Naive thymus-derived CD4-positive, alpha-beta T cell (primary cell): ENCODE measurements at regions of chr6 and their contacts with region 1.

Region 1: GRCh38 chr6:142885182-142885867 is 59.7 kb downstream of the HIVEP2 start:
- DNase-seq: peak; percentile 28 to 91 (median 83)
- ATAC-seq: peak; percentile 92
- H3K4me3 ChIP-seq: peak overlapping the region; percentile 44
- H3K4me3 Mint-ChIP-seq: peak overlapping the region; percentile 78 to 98 (median 94)
- H3K27ac ChIP-seq: peak overlapping the region; percentile 84
- H3K27ac Mint-ChIP-seq: peak overlapping the region; percentile 76 to 100 (median 99)
- H3K4me1 ChIP-seq: peaks cover 52 to 62% of the 10 kb centered on the region in 2 donors
- H3K4me1 Mint-ChIP-seq: peaks cover 45 to 99% (median 94%) of the 10 kb centered on the region in 7 donors
- H3K27me3 ChIP-seq: no peaks in the 10 kb centered on the region
- H3K27me3 Mint-ChIP-seq: no peaks in the 10 kb centered on the region

Region 2: GRCh38 chr6:142146828-142147662 is 738.3 kb before region 1 on chr6 and contains the starts of genes NMBR and VTA1:
- CTCF ChIA-PET with region 1: no interaction called
- POLR2A ChIA-PET with region 1: no interaction called
- intact Hi-C with region 1: loop called in 1 of 2 experiments (anchors 10 kb)
- DNase-seq: peak; percentile 81 to 98 (median 97)
- ATAC-seq: peak; percentile 99
- H3K4me3 ChIP-seq: peak within 1 kb of the TSS; percentile 95
- H3K4me3 Mint-ChIP-seq: peak within 1 kb of the TSS; percentile 88 to 98 (median 95)
- H3K27ac ChIP-seq: peak within 1 kb of the TSS; percentile 75
- H3K27ac Mint-ChIP-seq: peak within 1 kb of the TSS; percentile 80 to 98 (median 94)
- H3K4me1 ChIP-seq: peaks cover 22 to 25% of the 10 kb centered on the region in 2 donors
- H3K4me1 Mint-ChIP-seq: peaks cover 36 to 73% (median 65%) of the 10 kb centered on the region in 7 donors
- H3K27me3 ChIP-seq: no peaks in the 10 kb centered on the region
- H3K27me3 Mint-ChIP-seq: peaks cover 0 to 2% (median 0%) of the 10 kb centered on the region in 5 donors
- total RNA-seq, gene NMBR: not detected
- total RNA-seq, gene VTA1: 13.6 to 41.3 (median 32.6) TPM

Region 3: DNA sequence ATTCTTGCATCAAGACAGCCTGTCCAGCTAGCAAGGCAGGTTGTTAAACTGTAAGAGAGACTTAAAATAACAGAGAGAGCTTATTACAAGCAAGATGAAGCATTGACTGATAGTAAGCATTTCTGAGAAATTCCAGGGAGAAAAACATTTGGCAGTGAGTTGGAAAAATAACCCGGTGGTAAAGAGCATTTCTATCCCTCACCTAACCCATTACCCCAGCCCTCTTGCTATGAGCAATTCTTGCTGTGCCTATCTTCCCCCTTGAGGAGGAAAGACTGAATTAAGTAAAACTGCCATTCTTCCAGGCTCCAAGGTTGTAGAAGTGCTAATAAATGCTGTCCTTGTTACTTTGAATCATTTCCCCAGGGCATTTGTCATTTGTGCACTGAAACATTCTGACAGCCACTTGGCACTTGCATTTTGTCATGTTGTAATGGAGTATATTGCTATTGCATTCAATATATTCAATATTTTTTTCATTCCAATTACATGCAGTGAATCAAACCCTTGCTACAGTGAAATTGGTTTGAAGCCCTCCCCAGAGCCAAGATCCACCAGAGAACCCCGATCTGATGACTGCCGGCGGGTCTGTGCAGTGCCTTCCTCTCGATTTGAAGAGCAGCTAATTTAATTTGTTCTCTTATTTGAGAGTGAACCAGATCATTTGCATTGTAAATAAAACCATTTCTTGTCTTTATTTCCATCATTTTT is 231.5 kb before region 1 on chr6:
- CTCF ChIA-PET with region 1: no interaction called
- POLR2A ChIA-PET with region 1: no interaction called
- intact Hi-C with region 1: no loop called
- DNase-seq: no peak
- ATAC-seq: no peak
- H3K4me3 ChIP-seq: no peak overlapping the region
- H3K4me3 Mint-ChIP-seq: no peak overlapping the region
- H3K27ac ChIP-seq: no peak overlapping the region
- H3K27ac Mint-ChIP-seq: no peak overlapping the region
- H3K4me1 ChIP-seq: no peaks in the 10 kb centered on the region
- H3K4me1 Mint-ChIP-seq: no peaks in the 10 kb centered on the region
- H3K27me3 ChIP-seq: no peaks in the 10 kb centered on the region
- H3K27me3 Mint-ChIP-seq: no peaks in the 10 kb centered on the region

Region 4: DNA sequence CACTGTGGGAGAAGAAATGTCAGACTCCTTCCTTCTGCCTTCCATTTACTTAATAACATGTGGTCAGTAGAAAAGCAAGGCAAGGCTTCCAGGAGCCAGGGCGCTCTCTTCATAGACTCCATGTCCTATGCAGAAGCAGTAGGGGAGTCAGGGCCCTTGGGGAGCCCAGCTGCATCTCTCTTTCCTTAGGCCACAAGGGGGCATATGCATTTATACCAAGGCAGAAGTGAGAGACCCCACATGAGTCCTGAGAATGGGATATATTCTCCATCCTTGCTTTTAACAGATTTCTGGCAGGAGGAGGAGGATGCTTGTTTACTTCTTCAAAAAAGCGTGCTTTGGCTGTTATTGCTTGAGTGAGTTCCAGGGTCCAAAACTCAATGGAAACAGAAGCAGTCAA is 138.8 kb before region 1 on chr6:
- CTCF ChIA-PET with region 1: interaction called, 4 read pairs
- POLR2A ChIA-PET with region 1: interaction called, 3 read pairs
- intact Hi-C with region 1: loop called (anchors 1 to 5 kb)
- DNase-seq: peak in 7 of 9 donors; percentile 16 to 49 (median 31)
- ATAC-seq: peak; percentile 69
- H3K4me3 ChIP-seq: no peak overlapping the region
- H3K4me3 Mint-ChIP-seq: no peak overlapping the region
- H3K27ac ChIP-seq: no peak overlapping the region
- H3K27ac Mint-ChIP-seq: peak overlapping the region in 2 of 9 donors; percentile 26 to 60
- H3K4me1 ChIP-seq: no peaks in the 10 kb centered on the region
- H3K4me1 Mint-ChIP-seq: peaks cover 0 to 30% (median 17%) of the 10 kb centered on the region in 7 donors
- H3K27me3 ChIP-seq: no peaks in the 10 kb centered on the region
- H3K27me3 Mint-ChIP-seq: peaks cover 0 to 4% (median 0%) of the 10 kb centered on the region in 5 donors

Region 5: DNA sequence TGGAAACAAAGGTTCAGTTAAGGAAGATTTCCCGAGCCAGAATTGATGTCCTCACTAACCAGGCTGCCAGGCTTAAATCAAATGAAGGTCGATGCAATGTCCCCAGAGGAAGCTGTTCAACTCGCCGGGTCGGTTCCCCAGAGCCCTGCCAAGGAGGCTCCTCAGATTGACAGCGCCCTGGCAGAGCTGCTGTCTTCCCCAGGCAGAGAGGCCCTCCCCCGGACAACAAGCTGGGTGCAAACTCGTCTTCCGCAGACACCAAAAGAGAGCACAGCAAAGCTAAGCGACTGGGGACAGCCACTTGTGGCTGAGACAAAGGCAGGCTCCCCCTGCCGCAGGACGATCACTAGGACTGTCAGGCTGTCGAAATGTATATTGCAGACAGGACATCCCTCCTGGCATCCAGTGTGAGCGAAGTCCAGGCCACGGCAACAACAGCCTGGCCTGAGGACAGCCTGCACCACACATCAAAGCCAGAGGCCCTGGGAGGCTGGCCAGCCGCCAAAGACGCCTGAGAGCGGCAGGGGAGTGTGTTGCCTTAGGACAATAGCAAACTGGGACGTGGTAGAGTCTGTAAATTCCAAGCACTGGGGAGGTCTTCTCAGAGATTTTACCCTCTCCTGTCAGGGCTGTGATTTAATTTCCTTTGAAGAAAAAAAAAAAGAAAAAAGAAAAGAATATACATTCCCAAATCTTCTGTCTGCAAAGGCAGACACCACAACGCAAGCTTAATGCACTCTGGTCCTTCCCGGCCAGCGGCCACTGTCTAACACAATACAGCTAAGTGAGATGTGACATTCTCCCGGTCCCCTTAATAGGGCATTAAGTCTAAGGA is 39.5 kb before region 1 on chr6:
- CTCF ChIA-PET with region 1: interaction called, 5 read pairs
- POLR2A ChIA-PET with region 1: interaction called, 10 read pairs
- intact Hi-C with region 1: loop called (anchors 1 kb)
- DNase-seq: peak; percentile 27 to 70 (median 63)
- ATAC-seq: peak; percentile 72
- H3K4me3 ChIP-seq: peak overlapping the region; percentile 44
- H3K4me3 Mint-ChIP-seq: peak overlapping the region; percentile 84 to 93 (median 86)
- H3K27ac ChIP-seq: peak overlapping the region; percentile 84
- H3K27ac Mint-ChIP-seq: peak overlapping the region; percentile 91 to 100 (median 95)
- H3K4me1 ChIP-seq: peaks cover 69 to 74% of the 10 kb centered on the region in 2 donors
- H3K4me1 Mint-ChIP-seq: peaks cover 49 to 99% (median 86%) of the 10 kb centered on the region in 7 donors
- H3K27me3 ChIP-seq: no peaks in the 10 kb centered on the region
- H3K27me3 Mint-ChIP-seq: no peaks in the 10 kb centered on the region

Region 6: DNA sequence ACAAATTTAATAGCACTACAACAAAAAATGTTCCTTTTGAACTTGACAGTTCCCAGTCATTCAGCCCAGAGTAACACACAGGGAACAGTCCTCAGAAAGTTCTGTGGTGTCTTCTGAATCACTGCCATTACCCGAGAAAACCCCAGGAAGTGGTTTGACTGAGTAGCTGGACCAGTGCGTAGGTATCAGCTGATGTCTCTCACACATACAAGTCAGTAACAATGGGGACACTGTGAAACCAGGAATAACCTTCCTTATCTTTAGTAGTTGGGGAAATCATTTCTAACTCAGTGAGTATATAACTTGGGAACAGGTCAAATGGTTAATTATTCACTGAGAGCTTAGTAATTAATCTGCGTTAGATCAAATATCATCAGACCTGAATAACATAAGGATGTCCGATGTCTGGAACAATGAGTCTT is 13.4 kb before region 1 on chr6:
- CTCF ChIA-PET with region 1: interaction called, 17 read pairs
- POLR2A ChIA-PET with region 1: interaction called, 34 read pairs
- intact Hi-C with region 1: loop called (anchors 1 kb)
- DNase-seq: peak in 8 of 9 donors; percentile 40 to 74 (median 58)
- ATAC-seq: peak; percentile 90
- H3K4me3 ChIP-seq: no peak overlapping the region
- H3K4me3 Mint-ChIP-seq: peak overlapping the region; percentile 34 to 70 (median 52)
- H3K27ac ChIP-seq: peak overlapping the region; percentile 61
- H3K27ac Mint-ChIP-seq: peak overlapping the region; percentile 73 to 95 (median 91)
- H3K4me1 ChIP-seq: peaks cover 32 to 64% of the 10 kb centered on the region in 2 donors
- H3K4me1 Mint-ChIP-seq: peaks cover 59 to 97% (median 93%) of the 10 kb centered on the region in 7 donors
- H3K27me3 ChIP-seq: no peaks in the 10 kb centered on the region
- H3K27me3 Mint-ChIP-seq: no peaks in the 10 kb centered on the region

Region 7: GRCh38 chr6:142926494-142927270 is 41.4 kb after region 1 on chr6:
- CTCF ChIA-PET with region 1: interaction called, 7 read pairs
- POLR2A ChIA-PET with region 1: interaction called, 28 read pairs
- intact Hi-C with region 1: loop called (anchors 1 kb)
- DNase-seq: peak; percentile 62 to 87 (median 84)
- ATAC-seq: peak; percentile 88
- H3K4me3 ChIP-seq: peak overlapping the region; percentile 87
- H3K4me3 Mint-ChIP-seq: peak overlapping the region; percentile 88 to 99 (median 96)
- H3K27ac ChIP-seq: peak overlapping the region; percentile 100
- H3K27ac Mint-ChIP-seq: peak overlapping the region; percentile 93 to 100 (median 100)
- H3K4me1 ChIP-seq: peaks cover 35 to 40% of the 10 kb centered on the region in 2 donors
- H3K4me1 Mint-ChIP-seq: peaks cover 20 to 75% (median 68%) of the 10 kb centered on the region in 7 donors
- H3K27me3 ChIP-seq: no peaks in the 10 kb centered on the region
- H3K27me3 Mint-ChIP-seq: no peaks in the 10 kb centered on the region

Region 8: GRCh38 chr6:144149891-144150709 is 1264.8 kb after region 1 on chr6 and contains the start of gene STX11:
- CTCF ChIA-PET with region 1: no interaction called
- POLR2A ChIA-PET with region 1: no interaction called
- intact Hi-C with region 1: no loop called
- DNase-seq: peak; percentile 37 to 88 (median 51)
- ATAC-seq: peak; percentile 86
- H3K4me3 ChIP-seq: peak within 1 kb of the TSS; percentile 69
- H3K4me3 Mint-ChIP-seq: peak within 1 kb of the TSS; percentile 91 to 98 (median 95)
- H3K27ac ChIP-seq: peak within 1 kb of the TSS; percentile 62
- H3K27ac Mint-ChIP-seq: peak within 1 kb of the TSS; percentile 89 to 98 (median 94)
- H3K4me1 ChIP-seq: peaks cover 0 to 17% of the 10 kb centered on the region in 2 donors
- H3K4me1 Mint-ChIP-seq: peaks cover 6 to 43% (median 15%) of the 10 kb centered on the region in 7 donors
- H3K27me3 ChIP-seq: no peaks in the 10 kb centered on the region
- H3K27me3 Mint-ChIP-seq: peaks cover 0 to 2% (median 0%) of the 10 kb centered on the region in 5 donors
- total RNA-seq, gene STX11: 2.6 to 60.5 (median 11.6) TPM